H1 (cell line): ENCODE measurements at regions of chr16 and their contacts with region 1.

Region 1: GRCh38 chr16:50381679-50382440 is 13.1 kb upstream of the BRD7 start:
- DNase-seq: no peak
- H3K4me3 ChIP-seq: no peak overlapping the region
- H3K27ac ChIP-seq: no peak overlapping the region
- H3K4me1 ChIP-seq: peaks cover 0 to 5% (median 0%) of the 10 kb centered on the region in 4 experiments; a peak in 1 of 7 replicates
- H3K27me3 ChIP-seq: no peaks in the 10 kb centered on the region
- CTCF ChIP-seq: peak; percentile 70 to 83 (median 79)
- EP300 ChIP-seq: no peak
- POLR2A ChIP-seq: no peak
- RAD21 ChIP-seq: peak; percentile 41 to 62

Region 2: DNA sequence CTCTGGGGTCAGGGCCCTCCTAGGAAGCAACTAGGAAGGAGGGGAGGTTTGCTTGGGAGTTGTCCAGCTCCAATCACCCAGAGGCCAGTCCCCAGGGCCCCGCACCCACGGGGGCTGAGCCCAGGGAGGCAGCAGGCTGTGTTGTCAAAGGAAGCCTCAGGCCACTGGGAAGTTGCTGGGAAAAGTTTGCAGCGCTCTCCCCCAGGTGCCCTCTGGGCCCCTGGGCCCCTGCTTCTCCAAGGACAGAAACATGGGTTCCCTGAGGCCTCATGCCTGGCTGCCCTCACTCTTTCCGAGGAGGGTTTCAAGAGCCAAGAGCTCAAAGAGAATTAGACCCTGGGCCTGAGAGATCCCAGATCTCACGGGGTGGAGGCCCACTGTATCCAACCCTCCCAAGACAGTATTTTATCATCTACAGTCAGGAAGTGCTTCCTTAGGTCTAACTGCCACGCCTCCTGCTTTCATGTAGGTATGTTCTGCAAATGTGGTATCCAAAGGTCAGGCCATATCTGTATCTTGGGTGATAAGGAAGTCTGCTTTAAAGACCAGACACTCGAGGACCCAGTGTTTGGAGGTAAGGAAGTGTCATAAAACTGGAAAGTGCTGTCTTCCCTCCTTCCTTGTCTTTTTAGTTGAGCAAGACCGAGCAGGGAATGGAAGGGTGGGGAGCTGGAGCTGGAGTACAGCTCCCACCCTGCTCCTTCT is 481.7 kb before region 1 on chr16:
- CTCF ChIA-PET with region 1: no interaction called
- POLR2A ChIA-PET with region 1: no interaction called
- DNase-seq: no peak
- H3K4me3 ChIP-seq: no peak overlapping the region
- H3K27ac ChIP-seq: no peak overlapping the region
- H3K4me1 ChIP-seq: no peaks in the 10 kb centered on the region
- H3K27me3 ChIP-seq: no peaks in the 10 kb centered on the region
- CTCF ChIP-seq: no peak
- EP300 ChIP-seq: no peak
- POLR2A ChIP-seq: no peak
- RAD21 ChIP-seq: no peak

Region 3: GRCh38 chr16:50311891-50312501 is 69.9 kb before region 1 on chr16:
- CTCF ChIA-PET with region 1: no interaction called
- POLR2A ChIA-PET with region 1: no interaction called
- DNase-seq: no peak
- H3K4me3 ChIP-seq: no peak overlapping the region
- H3K27ac ChIP-seq: no peak overlapping the region
- H3K4me1 ChIP-seq: no peaks in the 10 kb centered on the region; a peak in 1 of 7 replicates
- H3K27me3 ChIP-seq: no peaks in the 10 kb centered on the region
- CTCF ChIP-seq: no peak
- EP300 ChIP-seq: no peak
- POLR2A ChIP-seq: no peak; a peak in 1 of 3 replicates
- RAD21 ChIP-seq: no peak

Region 4: DNA sequence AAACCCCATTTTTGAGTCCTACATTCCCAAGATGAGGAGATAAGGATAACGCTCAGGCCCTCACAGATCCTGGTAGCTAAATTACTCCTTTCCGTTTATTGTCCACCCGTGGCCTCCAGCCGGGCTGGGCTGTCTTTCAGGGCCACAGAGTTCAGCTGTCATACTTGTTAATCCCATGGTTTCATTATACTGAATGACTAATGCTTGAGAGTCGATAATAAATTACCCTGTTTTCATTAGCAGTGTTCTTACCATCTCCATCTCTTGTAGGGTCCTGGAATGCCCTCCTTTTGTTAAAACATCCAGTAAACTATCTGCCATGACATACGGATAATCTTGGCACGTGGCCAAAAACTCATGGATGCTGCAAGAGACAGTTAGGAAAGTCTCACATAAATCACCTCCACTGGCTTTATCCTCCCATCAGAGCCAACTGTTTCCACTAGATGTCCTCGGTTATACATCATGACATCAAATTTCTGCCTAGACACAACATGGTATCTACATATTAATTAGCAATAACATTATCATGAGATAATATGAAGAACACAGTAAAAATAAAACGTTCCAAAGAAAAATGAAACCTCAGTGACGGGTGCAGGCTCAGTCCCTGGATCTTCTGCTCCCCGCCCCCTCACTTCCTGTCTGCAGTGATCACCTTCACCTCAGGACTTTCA is 58.4 kb before region 1 on chr16:
- CTCF ChIA-PET with region 1: no interaction called
- POLR2A ChIA-PET with region 1: no interaction called
- DNase-seq: no peak
- H3K4me3 ChIP-seq: no peak overlapping the region
- H3K27ac ChIP-seq: no peak overlapping the region
- H3K4me1 ChIP-seq: no peaks in the 10 kb centered on the region
- H3K27me3 ChIP-seq: no peaks in the 10 kb centered on the region
- CTCF ChIP-seq: peak in 1 of 3 experiments; percentile 30; a peak in 1 of 4 replicates
- EP300 ChIP-seq: no peak
- POLR2A ChIP-seq: no peak
- RAD21 ChIP-seq: peak; percentile 13 to 30; a peak in 2 of 4 replicates

Region 5: GRCh38 chr16:50395763-50396710 is 14.2 kb after region 1 on chr16:
- CTCF ChIA-PET with region 1: interaction called, 14 read pairs
- POLR2A ChIA-PET with region 1: no interaction called
- DNase-seq: peak in 1 of 2 experiments; percentile 26
- H3K4me3 ChIP-seq: no peak overlapping the region
- H3K27ac ChIP-seq: no peak overlapping the region
- H3K4me1 ChIP-seq: no peaks in the 10 kb centered on the region; a peak in 2 of 7 replicates
- H3K27me3 ChIP-seq: peaks cover 0 to 2% (median 0%) of the 10 kb centered on the region in 4 experiments; a peak in 1 of 7 replicates
- CTCF ChIP-seq: no peak
- EP300 ChIP-seq: no peak
- POLR2A ChIP-seq: no peak
- RAD21 ChIP-seq: no peak

Region 6: DNA sequence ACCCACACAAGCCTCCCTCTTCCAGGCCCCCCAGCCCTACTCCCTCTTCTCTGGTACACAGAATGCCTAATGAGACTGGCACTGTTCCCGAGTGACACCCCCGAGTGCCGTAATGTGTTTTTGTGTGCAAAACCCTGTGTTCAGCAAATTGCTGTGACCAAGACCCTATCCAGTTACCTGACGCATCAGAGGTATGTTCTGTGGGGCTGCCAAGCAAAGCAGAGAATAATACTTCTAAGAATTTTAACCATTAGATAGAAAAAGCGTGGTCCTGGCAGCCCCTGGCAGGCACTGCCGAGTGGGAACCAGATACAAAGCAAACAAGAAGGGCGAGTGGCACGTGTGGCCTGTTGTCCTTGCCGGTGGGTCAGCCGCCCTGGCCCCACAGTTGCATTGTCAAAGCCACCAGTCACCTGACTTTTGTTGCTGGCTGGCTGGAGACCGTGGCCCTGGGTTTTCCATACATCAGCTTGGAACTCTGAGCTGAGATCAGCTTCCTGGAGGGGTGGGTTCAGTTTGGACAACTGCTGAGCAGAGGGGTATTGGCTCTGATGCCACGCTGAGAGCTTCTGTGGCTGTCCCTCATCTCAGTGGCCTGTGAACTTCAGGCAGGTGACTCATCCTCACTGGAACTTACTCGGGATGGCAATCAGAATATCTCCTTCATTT is 56.0 kb after region 1 on chr16:
- CTCF ChIA-PET with region 1: no interaction called
- POLR2A ChIA-PET with region 1: no interaction called
- DNase-seq: no peak
- H3K4me3 ChIP-seq: no peak overlapping the region
- H3K27ac ChIP-seq: no peak overlapping the region
- H3K4me1 ChIP-seq: peaks cover 0 to 3% (median 0%) of the 10 kb centered on the region in 4 experiments; a peak in 1 of 7 replicates
- H3K27me3 ChIP-seq: peaks cover 0 to 3% (median under 1%) of the 10 kb centered on the region in 4 experiments; a peak in 1 of 7 replicates
- CTCF ChIP-seq: no peak
- EP300 ChIP-seq: no peak
- POLR2A ChIP-seq: no peak
- RAD21 ChIP-seq: no peak

Region 7: DNA sequence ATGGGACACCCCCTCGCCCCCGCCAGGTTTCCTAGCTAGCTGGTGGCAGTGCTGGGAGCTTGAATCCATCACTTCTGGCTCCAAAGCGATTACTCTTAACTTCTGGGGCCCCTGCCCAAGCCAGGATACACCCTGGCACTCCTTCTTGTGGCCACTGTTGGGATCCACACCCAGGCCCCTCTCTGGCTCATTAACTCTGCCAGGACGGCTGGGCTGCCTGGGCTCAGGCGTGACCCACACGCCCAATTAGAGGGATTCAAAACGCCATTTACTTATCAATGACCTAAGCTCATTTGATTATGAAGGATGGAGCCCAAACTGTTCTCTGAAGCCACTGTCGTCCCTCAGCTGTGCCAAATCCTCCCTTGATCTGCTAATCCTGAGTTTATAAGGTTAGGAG is 66.6 kb after region 1 on chr16:
- CTCF ChIA-PET with region 1: interaction called, 10 read pairs
- POLR2A ChIA-PET with region 1: no interaction called
- DNase-seq: peak in 1 of 2 experiments; percentile 63
- H3K4me3 ChIP-seq: no peak overlapping the region; a peak in 1 of 8 replicates
- H3K27ac ChIP-seq: no peak overlapping the region
- H3K4me1 ChIP-seq: peaks cover 9 to 30% (median 17%) of the 10 kb centered on the region in 4 experiments; a peak in 6 of 7 replicates
- H3K27me3 ChIP-seq: no peaks in the 10 kb centered on the region; a peak in 1 of 7 replicates
- CTCF ChIP-seq: peak; percentile 62 to 76 (median 67)
- EP300 ChIP-seq: no peak
- POLR2A ChIP-seq: no peak
- RAD21 ChIP-seq: peak; percentile 65 to 75